PC-9 (cell line): ENCODE measurements at regions of chr10 and their contacts with region 1.

Region 1: GRCh38 chr10:124436191-124436638 is 13.6 kb downstream of the NKX1-2 start:
- DNase-seq: peak; percentile 41 to 84
- H3K4me3 ChIP-seq: no peak overlapping the region
- H3K27ac ChIP-seq: peak overlapping the region; percentile 68
- H3K4me1 ChIP-seq: peaks cover 32% of the 10 kb centered on the region
- H3K27me3 ChIP-seq: no peaks in the 10 kb centered on the region
- CTCF ChIP-seq: no peak

Region 2: DNA sequence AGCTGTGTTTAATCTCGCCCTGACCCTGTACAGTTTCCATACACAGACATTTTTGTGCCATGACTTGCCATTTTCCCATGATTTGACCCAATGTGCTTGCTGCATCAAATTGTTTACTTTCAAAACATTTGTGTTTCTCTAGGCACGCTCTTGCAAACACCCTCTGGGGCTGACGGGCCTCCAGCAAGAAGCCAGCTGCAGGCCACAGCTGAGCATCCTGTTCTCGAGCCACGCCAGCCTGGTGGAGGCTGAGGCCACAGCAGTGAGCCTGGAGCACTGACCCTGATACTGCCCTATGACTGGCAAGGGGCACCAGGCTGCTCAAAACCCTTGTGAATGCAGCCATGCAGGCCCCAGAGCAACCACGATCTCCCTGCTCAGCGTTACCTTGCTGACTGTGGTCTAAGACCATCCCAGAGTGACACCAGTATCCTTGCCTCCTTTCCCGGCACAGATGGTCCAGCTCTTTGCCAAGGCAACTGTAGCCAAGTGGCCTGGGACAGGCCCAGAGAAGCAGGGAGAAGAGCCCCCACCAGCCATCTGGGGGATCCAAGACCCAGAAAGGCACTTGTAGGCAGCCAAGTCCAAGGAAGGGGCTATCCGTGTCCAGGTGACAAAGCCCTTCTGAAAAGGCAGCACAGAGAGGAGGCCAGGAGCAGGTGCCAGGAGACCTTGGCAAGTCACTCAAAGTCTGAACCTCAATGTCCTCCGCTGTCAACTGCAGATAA is 96.0 kb before region 1 on chr10:
- CTCF ChIA-PET with region 1: no interaction called
- POLR2A ChIA-PET with region 1: no interaction called
- intact Hi-C with region 1: no loop called
- DNase-seq: no peak
- H3K4me3 ChIP-seq: no peak overlapping the region
- H3K27ac ChIP-seq: no peak overlapping the region
- H3K4me1 ChIP-seq: 0 out of 2 replicates have a peak, but pooled peaks cover 3% of the 10 kb centered on the region
- H3K27me3 ChIP-seq: no peaks in the 10 kb centered on the region
- CTCF ChIP-seq: no peak

Region 3: GRCh38 chr10:124461438-124462347 is 25.5 kb after region 1 on chr10 and contains the start of gene LHPP:
- CTCF ChIA-PET with region 1: no interaction called
- POLR2A ChIA-PET with region 1: interaction called, 16 read pairs
- intact Hi-C with region 1: no loop called
- DNase-seq: peak; percentile 53 to 71
- H3K4me3 ChIP-seq: peak within 1 kb of the TSS; percentile 75
- H3K27ac ChIP-seq: peak within 1 kb of the TSS; percentile 52
- H3K4me1 ChIP-seq: peaks cover 39% of the 10 kb centered on the region
- H3K27me3 ChIP-seq: no peaks in the 10 kb centered on the region
- CTCF ChIP-seq: peak; percentile 8; the same call in 1 of the 2 replicates
- total RNA-seq, gene LHPP: 23.3 and 24.7 TPM in 2 replicates

Region 4: DNA sequence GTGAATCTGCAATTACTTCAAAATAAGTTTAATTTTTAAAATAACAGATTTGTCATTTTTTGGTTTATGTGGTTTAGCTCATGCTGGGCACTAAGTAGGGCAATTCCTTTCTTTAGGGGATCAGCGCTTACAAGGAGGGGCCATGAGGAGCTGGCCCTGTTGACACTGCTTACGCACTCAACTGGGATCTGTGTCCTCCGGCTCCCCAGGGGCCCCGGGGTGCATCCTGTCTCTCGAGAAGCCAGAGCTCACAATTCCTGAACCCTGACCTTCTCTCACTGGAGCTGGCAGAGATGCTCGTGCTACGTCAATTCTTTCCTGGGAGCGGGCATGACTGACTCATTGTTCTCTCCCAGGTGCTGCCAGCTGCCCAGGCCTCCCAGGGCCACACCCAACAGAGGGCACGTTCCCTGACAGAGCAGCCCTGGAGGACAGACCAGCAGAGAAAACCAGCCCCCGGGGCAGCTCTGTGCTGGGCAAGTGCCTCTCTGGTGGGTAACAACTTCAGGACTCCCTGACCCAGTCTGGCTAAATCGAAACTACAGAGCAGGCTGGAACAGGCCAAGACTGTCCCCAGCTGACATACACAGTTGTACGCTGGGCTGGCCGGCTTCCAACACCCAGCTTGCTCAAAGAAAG is 687.4 kb after region 1 on chr10:
- CTCF ChIA-PET with region 1: no interaction called
- POLR2A ChIA-PET with region 1: no interaction called
- intact Hi-C with region 1: no loop called
- DNase-seq: peak; percentile 84 to 89
- H3K4me3 ChIP-seq: no peak overlapping the region
- H3K27ac ChIP-seq: peak overlapping the region; percentile 82
- H3K4me1 ChIP-seq: peaks cover 26% of the 10 kb centered on the region
- H3K27me3 ChIP-seq: no peaks in the 10 kb centered on the region
- CTCF ChIP-seq: no peak